ENCODE measurements at regions of chr7 and their contacts with region 1.

Region 1: DNA sequence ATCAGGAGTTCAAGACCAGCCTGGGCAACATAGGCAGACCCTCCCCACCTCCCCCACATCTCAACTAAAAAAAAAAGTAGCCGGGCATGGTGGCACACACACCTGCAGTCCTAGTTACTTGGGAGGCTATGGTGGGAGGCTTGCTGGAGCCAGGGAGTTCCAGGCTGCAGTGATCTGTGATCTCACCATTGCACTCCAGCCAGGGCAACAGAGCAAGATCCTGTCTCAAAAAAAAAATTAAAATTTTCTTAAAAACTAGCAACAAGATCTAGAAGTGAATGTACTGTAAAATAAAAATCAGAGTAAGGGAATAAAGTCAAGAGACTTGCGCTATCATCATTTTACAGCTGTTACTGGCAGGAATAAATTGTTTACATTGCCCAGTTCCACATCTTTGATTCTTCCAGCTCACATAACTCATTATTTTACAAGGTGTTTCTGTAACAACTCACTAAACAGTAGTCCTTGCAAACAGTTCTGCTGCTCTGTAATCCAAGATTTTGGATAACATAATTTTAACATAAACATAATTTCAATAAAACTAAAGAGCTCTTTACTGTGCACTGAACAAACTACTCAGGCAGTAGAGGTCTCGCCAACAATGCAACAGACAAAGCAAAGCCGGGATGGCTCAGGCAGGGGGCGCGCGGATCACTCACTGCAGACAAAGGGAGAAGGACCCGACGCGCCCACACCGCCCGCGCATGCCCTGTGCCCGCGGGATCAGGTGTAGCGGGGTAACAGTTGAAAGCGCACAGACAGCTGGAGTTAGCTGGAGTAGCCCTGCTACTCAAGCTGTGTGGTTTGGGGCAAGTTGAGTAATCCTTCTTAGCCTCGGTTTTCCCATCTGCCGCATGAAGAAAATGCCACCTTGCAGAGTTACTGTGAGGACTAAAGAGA is 73.3 kb upstream of the NFE2L3 start:
- H3K4me3 ChIP-seq: peak overlapping the region; percentile 19; the same call in 1 of the 2 replicates
- H3K27ac ChIP-seq: no peak overlapping the region
- H3K4me1 ChIP-seq: peaks cover 23% of the 10 kb centered on the region
- CTCF ChIP-seq: peak; percentile 49; the same call in 1 of the 2 replicates

Region 2: DNA sequence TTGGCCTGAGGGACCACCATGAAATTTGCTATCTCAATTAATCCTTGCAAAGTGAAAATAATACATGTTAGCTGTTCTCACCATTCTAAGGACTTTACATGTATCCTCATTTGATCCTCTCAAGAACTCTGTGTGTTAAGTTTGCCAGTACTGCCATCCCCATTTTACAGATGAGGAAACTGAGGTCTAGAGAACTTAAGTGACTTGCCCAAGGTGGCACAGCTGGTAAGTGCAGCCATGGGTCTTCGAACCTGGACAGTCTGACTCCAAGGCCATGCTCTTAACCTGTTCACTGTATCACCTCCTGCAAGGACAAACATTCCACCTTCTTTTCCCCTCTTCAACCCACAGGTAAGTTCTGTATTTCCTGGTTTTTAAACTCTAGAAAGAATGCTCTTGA is 12.0 kb before region 1 on chr7:
- CTCF ChIA-PET with region 1: interaction called, 13 read pairs
- POLR2A ChIA-PET with region 1: no interaction called
- H3K4me3 ChIP-seq: no peak overlapping the region
- H3K27ac ChIP-seq: no peak overlapping the region
- H3K4me1 ChIP-seq: no peaks in the 10 kb centered on the region
- CTCF ChIP-seq: no peak